Esophagus squamous epithelium (tissue), 5 donors: ENCODE measurements at regions of chr20 and their contacts with region 1.

Region 1: GRCh38 chr20:36199345-36200257 is 36.7 kb upstream of the AAR2 start:
- DNase-seq: no peak
- H3K4me3 ChIP-seq: no peak overlapping the region
- H3K27ac ChIP-seq: no peak overlapping the region
- H3K4me1 ChIP-seq: no peaks in the 10 kb centered on the region
- H3K27me3 ChIP-seq: no peaks in the 10 kb centered on the region
- CTCF ChIP-seq: peak; percentile 76 to 94 (median 86)
- POLR2A ChIP-seq: no peak

Region 2: GRCh38 chr20:35988910-35989463 is 210.6 kb before region 1 on chr20:
- intact Hi-C with region 1: loop called (anchors 5 kb)
- DNase-seq: no peak
- H3K4me3 ChIP-seq: no peak overlapping the region
- H3K27ac ChIP-seq: no peak overlapping the region
- H3K4me1 ChIP-seq: no peaks in the 10 kb centered on the region
- H3K27me3 ChIP-seq: no peaks in the 10 kb centered on the region
- CTCF ChIP-seq: no peak
- POLR2A ChIP-seq: no peak

Region 3: DNA sequence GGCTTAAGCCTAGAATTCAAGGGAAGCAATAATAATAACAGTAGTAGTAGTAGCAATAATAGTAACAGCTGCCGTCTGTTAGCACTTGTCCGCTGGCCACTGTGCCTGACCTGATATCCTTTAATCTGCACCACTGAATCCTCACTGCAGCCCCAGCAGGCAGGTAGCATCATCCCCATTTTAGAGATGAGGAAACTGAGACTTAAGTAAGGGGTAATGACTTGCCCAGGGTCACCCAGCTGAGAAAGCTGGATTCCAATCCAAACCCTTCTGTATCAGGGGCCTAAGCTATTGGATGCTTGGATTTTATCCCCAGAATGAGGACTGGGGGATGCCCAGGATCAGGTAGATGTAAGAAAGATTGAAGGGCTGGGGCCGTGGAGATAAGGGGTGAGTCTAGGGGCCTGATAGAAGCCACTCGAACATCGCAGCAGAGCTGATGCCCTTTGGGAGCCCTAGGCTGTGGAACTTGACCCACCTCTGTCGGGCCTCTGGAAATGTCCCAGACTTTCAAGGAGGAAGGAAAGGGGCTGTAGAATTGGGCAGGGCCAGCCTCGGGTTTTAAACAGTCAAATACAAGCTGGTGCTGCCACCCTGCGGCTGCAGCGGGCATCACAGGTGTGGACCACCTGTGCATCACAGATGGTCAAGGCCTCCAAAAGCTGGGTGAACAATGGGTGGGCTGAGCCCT is 239.6 kb after region 1 on chr20:
- intact Hi-C with region 1: loop called (anchors 5 kb)
- DNase-seq: no peak
- H3K4me3 ChIP-seq: no peak overlapping the region
- H3K27ac ChIP-seq: no peak overlapping the region
- H3K4me1 ChIP-seq: peaks cover 0 to 11% (median 4%) of the 10 kb centered on the region in 3 donors
- H3K27me3 ChIP-seq: peaks cover 0 to 15% (median 0%) of the 10 kb centered on the region in 4 donors
- CTCF ChIP-seq: peak; percentile 51 to 93 (median 87)
- POLR2A ChIP-seq: no peak

Region 4: DNA sequence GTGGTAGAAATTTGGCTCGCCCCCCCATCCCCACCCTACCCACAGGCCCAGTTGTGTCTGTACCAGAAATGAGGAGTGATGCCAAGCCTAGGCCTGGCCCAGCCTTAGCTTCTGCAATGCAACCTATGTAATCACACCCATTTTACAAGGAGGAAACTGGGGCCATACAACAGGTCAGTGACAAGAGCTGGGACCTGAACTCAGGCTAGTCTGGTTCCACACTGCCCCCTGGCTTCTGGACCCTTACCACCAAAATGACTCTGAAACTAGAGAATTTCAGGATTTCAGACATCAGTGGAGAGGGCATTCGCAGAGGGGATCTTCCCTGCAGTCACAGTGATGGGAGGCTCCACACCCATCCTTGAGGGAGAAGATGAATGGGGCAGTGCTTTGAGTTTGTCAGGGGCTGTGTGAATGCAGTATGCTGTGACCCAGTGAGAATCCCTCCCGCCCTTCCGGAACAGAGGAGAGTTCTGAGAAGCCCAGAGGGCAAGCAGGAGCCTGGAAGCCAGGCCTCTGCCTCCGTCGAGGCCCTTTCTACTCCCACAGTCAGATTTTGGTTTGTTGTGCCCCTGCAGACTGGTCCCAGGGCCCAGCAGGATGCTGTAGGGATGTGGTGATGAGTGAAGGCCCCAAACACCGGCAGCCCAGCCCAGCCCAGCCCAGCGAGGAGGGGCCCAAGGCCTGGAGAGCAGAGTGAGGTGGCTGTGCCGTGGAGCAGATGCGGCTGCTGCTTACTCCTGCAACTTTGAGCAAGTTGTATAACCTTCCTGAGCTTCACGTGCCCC is 293.6 kb after region 1 on chr20:
- intact Hi-C with region 1: no loop called
- DNase-seq: no peak
- H3K4me3 ChIP-seq: no peak overlapping the region
- H3K27ac ChIP-seq: peak overlapping the region; percentile 66 to 85 (median 82)
- H3K4me1 ChIP-seq: peaks cover 30 to 68% (median 34%) of the 10 kb centered on the region in 3 donors
- H3K27me3 ChIP-seq: no peaks in the 10 kb centered on the region
- CTCF ChIP-seq: peak in 5 of 6 experiments; percentile 18 to 40 (median 31)
- POLR2A ChIP-seq: no peak